Activated B cell treated with CpG ODN at 0.5 μM for 24 hours (primary cell): ENCODE measurements at regions of chr5 and their contacts with region 1.

Region 1: GRCh38 chr5:141557681-141558136 is 61.1 kb downstream of the DIAPH1 start:
- DNase-seq: peak; percentile 66
- ATAC-seq: peak; percentile 82
- H3K4me3 Mint-ChIP-seq: no peak overlapping the region
- H3K27ac Mint-ChIP-seq: peak overlapping the region; percentile 72
- H3K4me1 Mint-ChIP-seq: peaks cover 4% of the 10 kb centered on the region
- H3K27me3 Mint-ChIP-seq: no peaks in the 10 kb centered on the region
- CTCF ChIP-seq: peak; percentile 38

Region 2: GRCh38 chr5:141326088-141326854 is 231.4 kb before region 1 on chr5:
- CTCF ChIA-PET with region 1: interaction called, 12 read pairs
- POLR2A ChIA-PET with region 1: no interaction called
- intact Hi-C with region 1: loop called (anchors 1 kb)
- DNase-seq: peak; percentile 41
- ATAC-seq: peak; percentile 90
- H3K4me3 Mint-ChIP-seq: peak overlapping the region; percentile 91
- H3K27ac Mint-ChIP-seq: peak overlapping the region; percentile 84
- H3K4me1 Mint-ChIP-seq: peaks cover 10% of the 10 kb centered on the region
- H3K27me3 Mint-ChIP-seq: peaks cover 35% of the 10 kb centered on the region
- CTCF ChIP-seq: no peak

Region 3: GRCh38 chr5:141412854-141413539 is 144.7 kb before region 1 on chr5 and contains the start of gene PCDHGA10:
- CTCF ChIA-PET with region 1: interaction called, 38 read pairs
- POLR2A ChIA-PET with region 1: interaction called, 5 read pairs
- intact Hi-C with region 1: no loop called
- DNase-seq: no peak
- ATAC-seq: peak; percentile 66
- H3K4me3 Mint-ChIP-seq: peak within 1 kb of the TSS; percentile 86
- H3K27ac Mint-ChIP-seq: peak within 1 kb of the TSS; percentile 41
- H3K4me1 Mint-ChIP-seq: peaks cover 21% of the 10 kb centered on the region
- H3K27me3 Mint-ChIP-seq: peaks cover 52% of the 10 kb centered on the region
- CTCF ChIP-seq: no peak
- total RNA-seq, gene PCDHGA10: 1.2 and 1.3 TPM in 2 replicates

Region 4: GRCh38 chr5:141430332-141431113 is 127.2 kb before region 1 on chr5 and contains the start of gene PCDHGA12:
- CTCF ChIA-PET with region 1: interaction called, 52 read pairs
- POLR2A ChIA-PET with region 1: interaction called, 3 read pairs
- intact Hi-C with region 1: loop called (anchors 1 kb)
- DNase-seq: no peak
- ATAC-seq: peak; percentile 86
- H3K4me3 Mint-ChIP-seq: peak within 1 kb of the TSS; percentile 80
- H3K27ac Mint-ChIP-seq: peak within 1 kb of the TSS; percentile 76
- H3K4me1 Mint-ChIP-seq: peaks cover 16% of the 10 kb centered on the region
- H3K27me3 Mint-ChIP-seq: peaks cover 46% of the 10 kb centered on the region
- CTCF ChIP-seq: no peak
- total RNA-seq, gene PCDHGA12: 1.3 and 1.6 TPM in 2 replicates